ENCODE measurements at regions of chr16 and their contacts with region 1.

Region 1: GRCh38 chr16:12819126-12820117 is 15.7 kb upstream of the CPPED1 start:
- DNase-seq: peak; percentile 21 to 81 (median 64)
- ATAC-seq: peak; percentile 58 to 75 (median 66)
- H3K4me3 ChIP-seq: no peak overlapping the region
- H3K4me3 Mint-ChIP-seq: no peak overlapping the region
- H3K27ac ChIP-seq: no peak overlapping the region
- H3K27ac Mint-ChIP-seq: no peak overlapping the region
- H3K4me1 ChIP-seq: peaks cover 0 to 3% of the 10 kb centered on the region in 2 experiments
- H3K4me1 Mint-ChIP-seq: peaks cover 0 to 4% (median 2%) of the 10 kb centered on the region in 3 donors
- H3K27me3 ChIP-seq: no peaks in the 10 kb centered on the region
- H3K27me3 Mint-ChIP-seq: no peaks in the 10 kb centered on the region

Region 2: DNA sequence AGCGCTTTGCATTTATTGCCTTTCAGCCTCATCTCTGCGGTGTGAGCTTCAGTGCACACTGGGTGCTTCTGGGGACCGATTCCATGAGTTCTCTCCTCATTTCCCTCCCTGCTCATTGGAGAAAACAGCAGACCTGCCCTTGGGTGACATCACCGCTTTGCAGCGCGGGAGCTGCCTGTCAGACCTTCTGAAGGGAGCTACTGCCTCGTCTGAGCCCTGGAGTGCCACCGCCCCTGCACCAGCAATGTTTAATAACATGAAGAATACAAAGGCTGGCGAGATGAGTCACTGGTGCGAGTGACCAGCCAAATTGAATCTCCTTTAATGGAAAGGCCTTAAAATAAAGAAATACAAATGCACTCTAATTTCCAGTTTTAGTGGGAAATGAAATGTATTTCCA is 14.5 kb after region 1 on chr16:
- CTCF ChIA-PET with region 1: interaction called in 1 of 2 experiments, 10 read pairs
- POLR2A ChIA-PET with region 1: interaction called in 1 of 2 experiments, 10 read pairs
- DNase-seq: no peak
- ATAC-seq: no peak
- H3K4me3 ChIP-seq: no peak overlapping the region
- H3K4me3 Mint-ChIP-seq: no peak overlapping the region
- H3K27ac ChIP-seq: no peak overlapping the region
- H3K27ac Mint-ChIP-seq: no peak overlapping the region
- H3K4me1 ChIP-seq: no peaks in the 10 kb centered on the region
- H3K4me1 Mint-ChIP-seq: peaks cover 0 to 7% (median 0%) of the 10 kb centered on the region in 3 donors
- H3K27me3 ChIP-seq: peaks cover 0 to 30% of the 10 kb centered on the region in 2 experiments
- H3K27me3 Mint-ChIP-seq: peaks cover 5 to 31% of the 10 kb centered on the region in 2 donors

Measured in T-cell (primary cell).